ENCODE measurements at regions of chr3 and their contacts with region 1.

Region 1: DNA sequence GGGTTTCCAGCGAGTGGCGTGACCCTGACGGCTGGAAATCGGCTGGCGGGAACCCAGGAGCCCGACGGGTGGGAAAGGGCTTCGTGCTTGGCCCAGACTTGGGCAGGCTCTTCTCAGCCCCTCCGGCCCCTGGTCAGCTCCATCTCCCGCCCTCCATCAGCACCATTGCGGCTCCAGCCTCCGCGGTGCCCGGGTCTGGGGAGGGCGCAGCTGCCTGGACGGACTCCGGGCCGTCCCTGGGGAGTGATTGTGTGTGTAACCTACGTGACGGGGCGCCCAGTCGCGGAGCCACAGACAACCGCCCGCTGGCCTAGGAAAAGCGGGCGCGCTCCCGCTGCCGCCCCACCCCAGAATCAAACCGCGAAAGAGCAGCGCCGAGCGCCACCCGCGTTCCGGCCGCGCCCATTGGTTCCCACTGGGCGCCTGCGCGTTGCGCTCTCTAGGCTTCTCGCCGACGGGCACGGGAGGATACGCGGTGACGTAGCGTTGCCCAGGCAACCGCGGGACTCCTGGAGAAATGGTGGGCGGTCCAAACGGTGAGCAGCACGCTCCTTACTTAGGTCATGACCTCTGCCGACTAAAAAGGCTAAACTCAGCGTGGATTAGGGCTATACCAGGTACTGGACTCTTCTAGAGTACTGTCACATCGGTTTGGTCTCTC is at the start of gene CFAP20DC:
- DNase-seq: peak; percentile 92
- H3K4me3 ChIP-seq: peak within 1 kb of the TSS; percentile 34 to 53 (median 51)
- H3K27ac ChIP-seq: peak within 1 kb of the TSS; percentile 37
- H3K4me1 ChIP-seq: peaks cover 6% of the 10 kb centered on the region
- H3K27me3 ChIP-seq: no peaks in the 10 kb centered on the region
- CTCF ChIP-seq: no peak
- POLR2A ChIP-seq: peak; percentile 93
- total RNA-seq, gene CFAP20DC: 1.9 and 2.1 TPM in 2 replicates

Region 2: DNA sequence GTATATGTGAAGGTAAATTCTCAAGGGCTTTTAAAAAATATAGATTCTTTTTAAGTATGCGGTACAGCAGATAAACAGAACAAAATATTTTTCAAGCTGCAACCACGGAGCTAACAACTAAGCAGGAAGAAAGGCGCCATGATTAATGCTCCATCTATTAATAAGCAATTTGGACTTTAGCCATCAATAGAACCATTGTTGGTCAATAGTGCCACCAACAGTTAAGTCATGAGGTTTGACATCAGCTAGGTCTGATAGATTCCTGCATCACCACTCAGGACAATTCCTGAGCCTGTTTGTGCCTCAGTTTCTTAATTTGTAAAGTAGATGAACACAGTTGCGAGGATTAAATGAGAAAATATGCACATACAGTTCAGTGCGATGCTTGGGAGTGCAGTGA is 318.1 kb before region 1 on chr3:
- CTCF ChIA-PET with region 1: interaction called, 3 read pairs
- POLR2A ChIA-PET with region 1: no interaction called
- dilution Hi-C with region 1: no loop called
- intact Hi-C with region 1: loop called (anchors 10 kb)
- DNase-seq: no peak
- H3K4me3 ChIP-seq: no peak overlapping the region
- H3K27ac ChIP-seq: no peak overlapping the region
- H3K4me1 ChIP-seq: no peaks in the 10 kb centered on the region
- H3K27me3 ChIP-seq: no peaks in the 10 kb centered on the region
- CTCF ChIP-seq: no peak
- POLR2A ChIP-seq: no peak

Region 3: DNA sequence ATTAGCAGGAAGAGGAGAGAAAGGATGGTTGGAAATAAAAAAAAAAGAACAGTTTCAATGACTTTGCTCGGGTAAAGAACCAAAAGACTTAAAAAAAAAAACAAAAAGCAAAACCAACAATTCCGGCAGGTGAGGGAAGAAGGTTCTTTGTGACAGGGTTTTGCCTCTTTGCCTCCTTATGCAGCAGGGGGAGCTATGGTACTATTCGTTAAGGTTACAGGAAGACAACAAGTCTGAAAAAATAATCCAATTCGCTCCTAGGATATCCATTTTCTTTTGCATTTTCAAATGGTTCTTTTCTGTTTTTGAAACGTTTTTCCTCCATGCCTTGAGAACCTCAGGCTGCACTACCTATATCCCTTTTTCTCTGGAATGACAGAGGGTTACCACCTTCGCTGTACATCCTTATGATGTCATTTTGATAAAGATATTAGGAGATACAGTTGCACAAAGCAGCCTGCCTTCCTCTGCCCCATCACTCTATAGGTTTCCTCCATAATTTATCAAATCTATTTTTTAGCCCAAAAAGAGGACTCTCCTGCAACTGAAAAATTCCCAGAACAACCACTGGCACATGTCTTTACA is 55.0 kb before region 1 on chr3:
- CTCF ChIA-PET with region 1: interaction called, 67 read pairs
- POLR2A ChIA-PET with region 1: no interaction called
- dilution Hi-C with region 1: no loop called
- intact Hi-C with region 1: loop called (anchors 1 kb)
- DNase-seq: peak; percentile 60
- H3K4me3 ChIP-seq: no peak overlapping the region
- H3K27ac ChIP-seq: no peak overlapping the region
- H3K4me1 ChIP-seq: peaks cover 19% of the 10 kb centered on the region
- H3K27me3 ChIP-seq: no peaks in the 10 kb centered on the region
- CTCF ChIP-seq: peak; percentile 59 to 71
- POLR2A ChIP-seq: no peak

Region 4: DNA sequence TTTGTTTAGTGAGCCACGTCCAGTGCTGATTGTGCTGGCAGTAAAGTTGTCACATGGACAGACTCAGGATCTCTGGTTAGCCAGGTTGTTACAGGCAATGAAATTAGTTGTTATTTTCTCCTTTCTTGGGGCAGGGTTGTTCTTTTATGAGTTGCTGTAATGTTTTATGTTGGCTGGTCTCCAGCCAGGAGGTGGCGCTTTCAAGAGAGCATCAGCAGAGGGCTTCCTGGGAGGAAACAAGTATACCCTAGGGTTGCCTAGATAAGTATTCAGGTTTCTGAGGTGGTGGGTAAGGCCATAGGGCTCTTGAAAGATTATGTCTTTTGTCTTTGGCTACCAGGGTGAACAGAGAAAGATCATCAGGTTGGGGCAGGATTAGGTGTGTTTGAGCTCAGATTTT is 14.5 kb after region 1 on chr3:
- CTCF ChIA-PET with region 1: interaction called, 14 read pairs
- POLR2A ChIA-PET with region 1: no interaction called
- dilution Hi-C with region 1: no loop called
- intact Hi-C with region 1: no loop called
- DNase-seq: no peak
- H3K4me3 ChIP-seq: no peak overlapping the region
- H3K27ac ChIP-seq: no peak overlapping the region
- H3K4me1 ChIP-seq: no peaks in the 10 kb centered on the region
- H3K27me3 ChIP-seq: peaks cover 2% of the 10 kb centered on the region in 2 experiments
- CTCF ChIP-seq: no peak
- POLR2A ChIP-seq: no peak